Aorta (tissue), 5 donors: ENCODE measurements at regions of chr11 and their contacts with region 1.

Region 1: DNA sequence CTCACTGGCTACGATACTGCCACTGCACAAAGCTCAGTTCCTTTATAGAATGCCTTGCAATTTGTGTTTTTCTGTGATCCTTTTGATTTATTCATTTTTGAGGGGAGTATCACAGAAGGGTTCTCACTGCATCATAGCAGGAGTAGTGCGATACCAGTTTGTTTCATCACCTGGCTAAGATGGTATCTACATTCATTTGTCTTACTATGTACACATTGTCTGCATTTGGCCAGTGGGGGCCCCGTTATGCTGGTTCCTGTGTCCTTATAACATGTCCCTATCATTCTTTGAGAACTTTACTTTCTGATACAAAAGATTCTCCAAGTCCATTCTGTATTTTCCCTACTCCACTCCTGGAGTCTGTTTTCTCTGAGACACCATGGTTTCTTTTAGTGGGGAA is 44.6 kb downstream of the APLP2 start:
- DNase-seq: no peak
- ATAC-seq: no peak
- H3K4me3 ChIP-seq: no peak overlapping the region
- H3K27ac ChIP-seq: no peak overlapping the region
- H3K4me1 ChIP-seq: peaks cover 0 to 2% of the 10 kb centered on the region in 2 donors
- H3K27me3 ChIP-seq: no peaks in the 10 kb centered on the region

Region 2: DNA sequence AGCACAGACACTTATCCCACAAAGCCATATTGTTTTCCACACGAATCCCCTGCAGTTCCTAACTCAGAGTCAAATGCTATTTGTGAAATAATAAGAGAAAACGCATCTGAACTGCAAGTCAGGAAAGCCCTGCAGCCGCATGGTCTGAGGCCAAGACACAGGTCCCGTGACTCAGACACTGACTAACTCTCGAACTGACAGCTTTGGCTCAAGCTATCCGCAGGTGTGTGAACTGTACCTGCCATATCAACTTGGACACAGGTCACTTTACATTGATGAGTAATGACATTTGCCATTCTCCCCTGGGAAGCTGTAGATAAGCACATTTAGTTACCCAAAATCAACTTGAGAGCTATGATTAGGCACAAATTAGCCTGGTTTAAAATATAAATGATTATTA is 184.0 kb before region 1 on chr11:
- intact Hi-C with region 1: no loop called
- DNase-seq: no peak
- ATAC-seq: no peak
- H3K4me3 ChIP-seq: no peak overlapping the region
- H3K27ac ChIP-seq: no peak overlapping the region
- H3K4me1 ChIP-seq: no peaks in the 10 kb centered on the region
- H3K27me3 ChIP-seq: no peaks in the 10 kb centered on the region

Region 3: DNA sequence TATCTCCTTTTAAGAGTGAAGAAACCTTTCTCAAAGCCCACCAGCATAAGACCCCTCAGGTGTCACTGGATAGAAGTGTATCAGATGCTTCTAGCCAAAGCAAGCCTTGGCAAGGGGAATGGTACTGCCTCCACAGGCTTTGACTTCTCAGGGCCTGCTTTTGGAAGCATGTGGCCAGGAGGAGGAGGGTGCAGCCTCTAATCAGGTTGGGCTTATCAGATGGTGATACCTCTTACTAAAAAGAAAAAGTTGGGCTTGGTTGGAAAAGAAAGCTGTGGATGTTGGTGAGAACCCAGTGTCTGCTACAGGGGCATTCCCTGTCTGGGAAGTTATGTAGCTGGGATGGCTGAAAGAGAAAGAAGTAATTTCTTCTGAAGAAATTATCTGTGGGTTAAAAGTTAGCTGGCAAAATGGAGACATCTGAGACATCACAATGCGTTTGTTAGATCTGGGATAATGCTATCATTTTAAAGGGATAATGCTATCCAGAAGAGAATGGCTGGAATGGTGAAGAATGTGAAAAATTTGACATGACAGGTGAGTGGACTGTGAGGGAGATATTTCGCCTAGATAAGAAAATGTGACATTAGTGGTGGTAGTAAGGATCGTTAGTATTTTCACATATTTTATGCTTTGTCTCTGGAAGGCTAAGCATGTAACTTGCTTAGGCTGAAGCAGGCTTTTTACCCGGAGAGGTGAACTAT is 37.4 kb before region 1 on chr11:
- intact Hi-C with region 1: loop called in 1 of 2 experiments (anchors 5 kb)
- DNase-seq: no peak
- ATAC-seq: no peak
- H3K4me3 ChIP-seq: no peak overlapping the region
- H3K27ac ChIP-seq: no peak overlapping the region
- H3K4me1 ChIP-seq: peaks cover 0 to 3% of the 10 kb centered on the region in 2 donors
- H3K27me3 ChIP-seq: no peaks in the 10 kb centered on the region

Region 4: DNA sequence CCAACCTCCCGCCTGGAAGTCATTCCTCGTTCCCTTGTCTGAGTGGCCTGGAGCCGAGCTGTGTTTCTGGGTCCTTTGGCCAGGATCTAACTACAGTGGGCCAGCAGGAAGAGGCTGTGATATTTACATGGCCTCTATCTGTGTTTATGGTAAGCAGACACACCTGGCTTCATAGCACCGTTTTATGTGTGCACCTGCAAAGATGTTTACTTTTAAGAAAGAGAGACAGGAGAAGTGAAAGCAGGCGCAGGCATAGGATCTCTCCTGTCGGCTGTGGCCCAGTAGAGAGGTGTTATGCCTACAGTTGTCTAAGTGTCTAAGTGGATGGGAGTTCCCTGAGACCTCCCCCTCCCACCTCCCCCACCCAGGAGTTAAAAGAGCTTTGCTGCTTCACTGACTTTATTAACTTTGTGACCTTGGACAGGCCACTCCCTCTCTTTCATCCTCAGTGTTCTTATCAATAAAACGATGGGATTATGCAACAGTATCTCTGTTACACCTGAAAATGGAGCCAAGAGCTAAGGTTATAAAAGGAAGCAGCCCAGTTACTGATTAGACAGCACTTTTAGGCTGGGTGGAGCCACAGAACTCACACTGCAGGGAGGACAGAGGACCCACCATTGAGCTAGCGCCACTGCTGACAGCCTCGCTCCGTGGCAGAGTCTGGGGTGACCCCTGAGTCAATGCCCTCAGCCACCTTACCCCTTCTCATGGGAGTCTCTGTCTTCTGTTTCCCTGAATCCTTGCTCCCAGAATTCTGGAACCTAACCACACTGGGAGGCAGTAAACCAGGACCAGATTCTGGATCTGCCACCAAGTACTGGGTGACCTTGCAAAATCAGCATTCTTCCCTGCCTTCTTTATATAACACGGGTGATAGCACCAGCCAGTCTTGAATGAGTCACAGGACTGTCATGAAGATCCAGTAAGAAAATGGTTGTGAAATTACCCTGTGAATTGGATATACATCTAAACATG is 67.3 kb after region 1 on chr11:
- intact Hi-C with region 1: no loop called
- DNase-seq: no peak
- ATAC-seq: peak; percentile 26
- H3K4me3 ChIP-seq: no peak overlapping the region
- H3K27ac ChIP-seq: no peak overlapping the region
- H3K4me1 ChIP-seq: no peaks in the 10 kb centered on the region
- H3K27me3 ChIP-seq: no peaks in the 10 kb centered on the region

Region 5: GRCh38 chr11:130490682-130491449 is 376.6 kb after region 1 on chr11:
- intact Hi-C with region 1: no loop called
- DNase-seq: no peak
- ATAC-seq: no peak
- H3K4me3 ChIP-seq: no peak overlapping the region
- H3K27ac ChIP-seq: no peak overlapping the region
- H3K4me1 ChIP-seq: peaks cover 0 to 1% of the 10 kb centered on the region in 2 donors
- H3K27me3 ChIP-seq: no peaks in the 10 kb centered on the region